Mammary epithelial cell (primary cell): ENCODE measurements at regions of chr3 and their contacts with region 1.

Region 1: GRCh38 chr3:42891042-42891441 is 14.9 kb upstream of the ZNF662 start:
- DNase-seq: no peak
- H3K4me3 ChIP-seq: no peak overlapping the region
- H3K27ac ChIP-seq: no peak overlapping the region
- H3K4me1 ChIP-seq: no peaks in the 10 kb centered on the region
- H3K27me3 ChIP-seq: no peaks in the 10 kb centered on the region
- CTCF ChIP-seq: no peak

Region 2: DNA sequence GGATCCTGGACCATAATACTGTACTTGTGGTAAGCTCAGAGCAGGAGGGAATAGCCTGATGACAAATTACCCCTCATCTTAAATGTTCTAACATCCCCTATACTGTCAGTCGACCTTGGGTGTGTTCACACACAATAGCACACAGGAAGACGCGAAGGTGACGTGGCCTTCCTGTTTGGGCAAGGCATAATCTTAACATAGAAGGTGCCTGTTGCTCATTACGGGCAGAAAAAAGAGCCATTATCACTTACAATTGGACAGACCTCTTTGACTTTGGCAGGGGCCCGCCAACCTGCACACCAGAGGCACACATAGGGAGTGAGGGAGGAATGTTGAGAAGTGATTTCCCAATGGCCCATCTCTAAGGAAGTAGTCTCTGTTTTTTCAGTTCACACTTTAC is 586.6 kb after region 1 on chr3:
- CTCF ChIA-PET with region 1: no interaction called
- dilution Hi-C with region 1: no loop called
- in situ Hi-C with region 1: no loop called
- intact Hi-C with region 1: no loop called
- DNase-seq: no peak
- H3K4me3 ChIP-seq: no peak overlapping the region
- H3K27ac ChIP-seq: no peak overlapping the region
- H3K4me1 ChIP-seq: no peaks in the 10 kb centered on the region
- H3K27me3 ChIP-seq: no peaks in the 10 kb centered on the region
- CTCF ChIP-seq: no peak

Region 3: GRCh38 chr3:43597961-43598360 is 706.9 kb after region 1 on chr3:
- CTCF ChIA-PET with region 1: no interaction called
- dilution Hi-C with region 1: no loop called
- in situ Hi-C with region 1: no loop called
- intact Hi-C with region 1: no loop called
- DNase-seq: no peak
- H3K4me3 ChIP-seq: no peak overlapping the region
- H3K27ac ChIP-seq: no peak overlapping the region
- H3K4me1 ChIP-seq: no peaks in the 10 kb centered on the region
- H3K27me3 ChIP-seq: no peaks in the 10 kb centered on the region
- CTCF ChIP-seq: no peak

Region 4: GRCh38 chr3:44021651-44022594 is 1130.9 kb after region 1 on chr3:
- CTCF ChIA-PET with region 1: interaction called, 32 read pairs
- dilution Hi-C with region 1: no loop called
- in situ Hi-C with region 1: no loop called
- intact Hi-C with region 1: no loop called
- DNase-seq: no peak
- H3K4me3 ChIP-seq: peak overlapping the region; percentile 9 to 41 (median 16)
- H3K27ac ChIP-seq: no peak overlapping the region
- H3K4me1 ChIP-seq: peaks cover 15% of the 10 kb centered on the region
- H3K27me3 ChIP-seq: no peaks in the 10 kb centered on the region
- CTCF ChIP-seq: no peak